Caco-2 (cell line): ENCODE measurements at regions of chr3 and their contacts with region 1.

Region 1: DNA sequence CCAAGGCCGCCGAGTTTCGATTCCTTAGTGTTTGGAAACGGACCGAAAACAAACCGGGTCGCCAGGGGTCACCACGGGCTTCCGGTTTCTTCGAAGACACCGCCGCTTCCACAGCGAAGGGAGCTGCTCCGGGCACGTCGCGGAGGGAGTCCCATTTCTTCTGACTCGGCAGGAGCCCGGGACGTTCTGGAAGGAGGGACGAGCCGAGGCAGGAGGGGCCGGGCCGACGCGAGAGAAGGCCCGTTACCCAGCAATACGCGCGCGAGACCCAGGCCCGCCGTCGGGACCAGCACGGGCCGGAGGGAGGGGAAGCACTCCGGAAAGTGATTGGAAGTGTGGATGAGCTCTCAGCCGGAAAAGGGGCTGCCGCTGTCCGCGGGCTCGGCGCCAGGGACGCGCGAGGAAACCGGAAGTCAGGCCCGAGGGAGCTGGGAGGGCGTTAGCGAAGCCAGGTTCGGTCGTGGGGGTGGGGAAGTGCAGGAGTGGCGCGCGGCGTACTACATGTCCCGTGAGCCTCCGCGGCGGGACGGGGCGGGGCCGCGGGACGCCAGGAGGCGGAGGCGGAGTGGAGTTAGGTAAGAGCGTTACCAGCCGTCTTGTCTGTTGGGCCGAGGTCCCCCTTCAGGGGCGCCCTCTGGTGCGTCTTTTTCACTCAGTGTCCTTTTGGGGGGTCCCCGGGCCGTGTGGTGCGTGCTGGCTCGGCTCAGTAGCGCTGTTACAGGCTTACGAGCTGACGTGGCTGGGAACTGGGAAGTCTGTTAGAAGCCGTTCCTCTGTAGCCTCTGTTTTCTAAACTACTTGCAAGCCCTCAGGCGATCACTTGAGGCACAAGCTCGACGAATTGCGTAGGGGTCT is at the starts of genes AZI2 and ZCWPW2:
- DNase-seq: peak; percentile 93 to 94
- H3K4me3 ChIP-seq: peak within 1 kb of the TSS; percentile 69
- H3K4me3 Mint-ChIP-seq: peak within 1 kb of the TSS; percentile 99
- H3K27ac Mint-ChIP-seq: peak within 1 kb of the TSS; percentile 99
- H3K4me1 ChIP-seq: no peaks in the 10 kb centered on the region
- H3K4me1 Mint-ChIP-seq: peaks cover 7% of the 10 kb centered on the region
- H3K27me3 ChIP-seq: no peaks in the 10 kb centered on the region
- H3K27me3 Mint-ChIP-seq: no peaks in the 10 kb centered on the region
- CTCF ChIP-seq: peak in 1 of 2 experiments; percentile 38
- total RNA-seq, gene AZI2: 48.9 and 57.4 TPM in 2 replicates
- total RNA-seq, gene ZCWPW2: 0.18 and 0.46 TPM in 2 replicates

Region 2: GRCh38 chr3:28241221-28242160 is 107.4 kb before region 1 on chr3 and contains the start of gene CMC1:
- CTCF ChIA-PET with region 1: no interaction called
- POLR2A ChIA-PET with region 1: no interaction called
- intact Hi-C with region 1: loop called (anchors 2 kb)
- DNase-seq: peak; percentile 97 to 98
- H3K4me3 ChIP-seq: peak within 1 kb of the TSS; percentile 74
- H3K4me3 Mint-ChIP-seq: peak within 1 kb of the TSS; percentile 88
- H3K27ac Mint-ChIP-seq: peak within 1 kb of the TSS; percentile 80
- H3K4me1 ChIP-seq: peaks cover 17% of the 10 kb centered on the region
- H3K4me1 Mint-ChIP-seq: peaks cover 33% of the 10 kb centered on the region
- H3K27me3 ChIP-seq: no peaks in the 10 kb centered on the region
- H3K27me3 Mint-ChIP-seq: no peaks in the 10 kb centered on the region
- CTCF ChIP-seq: no peak
- total RNA-seq, gene CMC1: 22.8 and 23.7 TPM in 2 replicates

Region 3: DNA sequence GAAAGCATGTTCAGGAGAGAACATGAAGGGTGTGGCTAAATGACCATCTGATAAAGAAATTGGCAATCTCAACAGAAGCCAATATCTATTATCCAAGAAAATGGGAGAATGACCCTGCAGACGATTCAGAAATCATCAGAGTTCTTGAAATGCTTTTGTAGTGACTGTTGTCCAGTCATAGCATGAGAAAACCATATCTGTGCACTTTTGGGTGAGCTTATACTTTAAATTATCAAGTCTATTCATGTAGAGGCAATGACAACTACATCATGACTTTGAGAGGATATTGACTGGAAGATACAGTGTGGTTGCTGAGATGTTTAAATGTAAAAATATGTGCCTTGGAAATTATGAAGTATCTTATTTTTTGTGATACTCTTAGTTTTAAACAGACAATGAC is 57.4 kb after region 1 on chr3:
- CTCF ChIA-PET with region 1: no interaction called
- POLR2A ChIA-PET with region 1: no interaction called
- intact Hi-C with region 1: no loop called
- DNase-seq: no peak
- H3K4me3 ChIP-seq: no peak overlapping the region
- H3K4me3 Mint-ChIP-seq: no peak overlapping the region
- H3K27ac Mint-ChIP-seq: no peak overlapping the region
- H3K4me1 ChIP-seq: no peaks in the 10 kb centered on the region
- H3K4me1 Mint-ChIP-seq: no peaks in the 10 kb centered on the region
- H3K27me3 ChIP-seq: no peaks in the 10 kb centered on the region
- H3K27me3 Mint-ChIP-seq: no peaks in the 10 kb centered on the region
- CTCF ChIP-seq: no peak